ENCODE measurements at regions of chr12 and their contacts with region 1.

Region 1: GRCh38 chr12:123232807-123233543 is at the starts of genes MPHOSPH9 and MTRFR:
- DNase-seq: peak; percentile 100
- H3K4me3 ChIP-seq: peak within 1 kb of the TSS; percentile 65 to 100 (median 99)
- H3K27ac ChIP-seq: peak within 1 kb of the TSS; percentile 86
- H3K4me1 ChIP-seq: peaks cover 21% of the 10 kb centered on the region
- H3K27me3 ChIP-seq: no peaks in the 10 kb centered on the region
- CTCF ChIP-seq: no peak
- POLR2A ChIP-seq: peak; percentile 99
- total RNA-seq, gene MPHOSPH9: 42.4 and 55.6 TPM in 2 replicates
- total RNA-seq, gene MTRFR: 12.0 and 14.4 TPM in 2 replicates

Region 2: DNA sequence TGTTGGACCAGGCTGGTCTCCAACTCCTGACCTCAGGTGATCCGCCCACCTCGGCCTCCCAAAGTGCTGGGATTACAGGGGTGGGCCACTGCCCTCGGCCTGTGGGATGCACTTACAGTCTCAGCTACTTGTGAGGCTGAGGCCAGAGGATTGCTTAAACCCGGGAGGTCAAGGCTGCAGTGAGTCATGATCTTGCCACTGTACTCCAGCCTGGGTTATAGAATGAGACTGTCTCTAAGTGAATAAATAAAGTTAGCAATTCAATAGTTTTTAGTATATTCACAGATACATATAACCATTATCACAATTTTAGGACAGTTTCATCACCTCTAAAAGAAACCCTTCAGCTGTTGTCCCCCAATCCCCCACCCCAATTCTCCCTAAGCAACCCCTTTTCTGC is 591.0 kb before region 1 on chr12:
- CTCF ChIA-PET with region 1: interaction called, 14 read pairs
- POLR2A ChIA-PET with region 1: no interaction called
- dilution Hi-C with region 1: no loop called
- intact Hi-C with region 1: no loop called
- DNase-seq: no peak
- H3K4me3 ChIP-seq: no peak overlapping the region
- H3K27ac ChIP-seq: no peak overlapping the region
- H3K4me1 ChIP-seq: no peaks in the 10 kb centered on the region
- H3K27me3 ChIP-seq: no peaks in the 10 kb centered on the region
- CTCF ChIP-seq: no peak
- POLR2A ChIP-seq: no peak

Region 3: GRCh38 chr12:122860346-122861090 is 372.5 kb before region 1 on chr12:
- CTCF ChIA-PET with region 1: interaction called, 22 read pairs
- POLR2A ChIA-PET with region 1: no interaction called
- dilution Hi-C with region 1: no loop called
- intact Hi-C with region 1: loop called (anchors 5 kb)
- DNase-seq: peak; percentile 63
- H3K4me3 ChIP-seq: no peak overlapping the region
- H3K27ac ChIP-seq: no peak overlapping the region
- H3K4me1 ChIP-seq: no peaks in the 10 kb centered on the region
- H3K27me3 ChIP-seq: no peaks in the 10 kb centered on the region
- CTCF ChIP-seq: peak; percentile 80 to 88
- POLR2A ChIP-seq: no peak

Region 4: DNA sequence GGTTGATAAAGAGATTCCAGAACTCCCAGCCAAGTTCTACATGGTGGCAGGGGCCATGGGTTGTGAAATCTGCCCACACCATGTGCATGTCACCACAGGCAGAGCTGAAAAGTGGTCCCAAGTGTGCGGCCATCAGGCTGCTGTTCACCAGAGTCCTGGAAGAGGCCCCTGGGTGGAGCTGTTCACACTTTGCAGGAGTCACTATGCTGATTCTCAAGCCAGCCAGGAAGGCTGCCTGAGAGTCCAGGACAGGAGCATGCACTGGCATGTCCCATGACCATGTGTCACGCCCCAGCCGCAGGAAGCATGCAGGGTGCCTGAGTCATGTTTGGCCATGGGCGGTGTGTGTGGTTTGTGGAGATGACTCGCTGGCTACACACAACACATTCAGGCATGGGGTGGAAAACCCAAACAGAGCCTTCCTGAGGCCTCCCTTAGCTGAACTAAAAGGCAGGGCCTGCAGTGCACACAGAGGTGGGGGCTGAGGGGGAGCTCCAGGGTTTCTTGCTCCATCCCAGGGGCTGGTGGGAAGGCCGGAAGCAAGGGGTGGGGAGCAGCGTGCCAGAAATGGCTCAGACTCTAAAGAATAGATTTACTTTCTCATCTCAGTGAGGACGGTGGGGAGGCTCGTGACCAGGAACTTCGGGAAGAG is 286.2 kb before region 1 on chr12:
- CTCF ChIA-PET with region 1: interaction called, 19 read pairs
- POLR2A ChIA-PET with region 1: interaction called, 5 read pairs
- dilution Hi-C with region 1: no loop called
- intact Hi-C with region 1: loop called (anchors 2 kb)
- DNase-seq: peak; percentile 96
- H3K4me3 ChIP-seq: no peak overlapping the region
- H3K27ac ChIP-seq: peak overlapping the region; percentile 85
- H3K4me1 ChIP-seq: peaks cover 53% of the 10 kb centered on the region
- H3K27me3 ChIP-seq: no peaks in the 10 kb centered on the region
- CTCF ChIP-seq: peak; percentile 26 to 38
- POLR2A ChIP-seq: peak; percentile 41

Region 5: DNA sequence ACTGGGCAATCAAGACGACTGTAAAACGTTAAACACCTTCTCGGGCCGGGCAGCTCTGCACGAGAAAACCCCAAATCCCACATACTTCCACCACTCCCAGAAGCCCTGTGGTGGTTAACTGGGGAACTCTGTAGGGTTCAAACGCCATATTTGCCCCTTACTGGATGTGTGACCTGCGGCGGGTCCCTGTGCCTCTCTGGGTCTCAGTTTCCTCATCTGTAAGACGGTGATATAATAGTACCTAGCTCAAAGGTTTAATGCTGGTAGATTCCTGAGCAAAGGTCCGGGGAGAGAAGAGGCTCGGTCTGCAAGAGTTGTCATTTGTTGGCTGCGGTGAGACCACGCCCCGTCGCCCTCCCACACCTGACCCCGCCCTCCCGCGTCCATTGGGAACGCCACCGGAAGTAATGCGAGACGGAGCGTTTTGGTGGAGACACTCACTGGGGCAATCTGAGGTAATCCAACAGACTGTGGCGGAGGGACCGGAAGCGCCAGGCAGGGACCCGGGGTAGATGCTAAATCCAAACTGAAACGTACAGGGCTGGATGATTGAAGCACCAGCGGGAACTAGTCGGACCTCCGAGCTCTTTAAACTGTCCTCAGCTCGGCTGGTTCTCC is 258.6 kb before region 1 on chr12:
- CTCF ChIA-PET with region 1: interaction called, 24 read pairs
- POLR2A ChIA-PET with region 1: interaction called, 15 read pairs
- dilution Hi-C with region 1: no loop called
- intact Hi-C with region 1: loop called (anchors 2 kb)
- DNase-seq: peak; percentile 99
- H3K4me3 ChIP-seq: peak overlapping the region; percentile 65 to 87 (median 84)
- H3K27ac ChIP-seq: peak overlapping the region; percentile 99
- H3K4me1 ChIP-seq: peaks cover 12% of the 10 kb centered on the region
- H3K27me3 ChIP-seq: no peaks in the 10 kb centered on the region
- CTCF ChIP-seq: no peak
- POLR2A ChIP-seq: no peak

Region 6: GRCh38 chr12:123043536-123044001 is 189.4 kb before region 1 on chr12:
- CTCF ChIA-PET with region 1: interaction called, 255 read pairs
- POLR2A ChIA-PET with region 1: interaction called, 23 read pairs
- dilution Hi-C with region 1: no loop called
- intact Hi-C with region 1: loop called (anchors 1 kb)
- DNase-seq: peak; percentile 75
- H3K4me3 ChIP-seq: no peak overlapping the region
- H3K27ac ChIP-seq: no peak overlapping the region
- H3K4me1 ChIP-seq: no peaks in the 10 kb centered on the region
- H3K27me3 ChIP-seq: no peaks in the 10 kb centered on the region
- CTCF ChIP-seq: peak; percentile 63 to 84
- POLR2A ChIP-seq: no peak

Region 7: GRCh38 chr12:123271001-123271729 is 38.2 kb after region 1 on chr12:
- CTCF ChIA-PET with region 1: interaction called, 16 read pairs
- POLR2A ChIA-PET with region 1: interaction called, 7 read pairs
- dilution Hi-C with region 1: no loop called
- intact Hi-C with region 1: no loop called
- DNase-seq: no peak
- H3K4me3 ChIP-seq: peak overlapping the region; percentile 32 to 90 (median 87)
- H3K27ac ChIP-seq: peak overlapping the region; percentile 83
- H3K4me1 ChIP-seq: peaks cover 26% of the 10 kb centered on the region
- H3K27me3 ChIP-seq: no peaks in the 10 kb centered on the region
- CTCF ChIP-seq: peak; percentile 42 to 57
- POLR2A ChIP-seq: no peak

Region 8: GRCh38 chr12:123354600-123354999 is 121.6 kb after region 1 on chr12:
- CTCF ChIA-PET with region 1: no interaction called
- POLR2A ChIA-PET with region 1: no interaction called
- dilution Hi-C with region 1: no loop called
- intact Hi-C with region 1: no loop called
- DNase-seq: no peak
- H3K4me3 ChIP-seq: no peak overlapping the region
- H3K27ac ChIP-seq: no peak overlapping the region
- H3K4me1 ChIP-seq: no peaks in the 10 kb centered on the region
- H3K27me3 ChIP-seq: no peaks in the 10 kb centered on the region
- CTCF ChIP-seq: no peak
- POLR2A ChIP-seq: no peak

Region 9: GRCh38 chr12:124044809-124045321 is 811.9 kb after region 1 on chr12:
- CTCF ChIA-PET with region 1: no interaction called
- POLR2A ChIA-PET with region 1: no interaction called
- dilution Hi-C with region 1: no loop called
- intact Hi-C with region 1: no loop called
- DNase-seq: no peak
- H3K4me3 ChIP-seq: no peak overlapping the region
- H3K27ac ChIP-seq: no peak overlapping the region
- H3K4me1 ChIP-seq: peaks cover 6% of the 10 kb centered on the region
- H3K27me3 ChIP-seq: no peaks in the 10 kb centered on the region
- CTCF ChIP-seq: no peak
- POLR2A ChIP-seq: no peak